Naive thymus-derived CD4-positive, alpha-beta T cell (primary cell): ENCODE measurements at regions of chrX and their contacts with region 1.

Region 1: DNA sequence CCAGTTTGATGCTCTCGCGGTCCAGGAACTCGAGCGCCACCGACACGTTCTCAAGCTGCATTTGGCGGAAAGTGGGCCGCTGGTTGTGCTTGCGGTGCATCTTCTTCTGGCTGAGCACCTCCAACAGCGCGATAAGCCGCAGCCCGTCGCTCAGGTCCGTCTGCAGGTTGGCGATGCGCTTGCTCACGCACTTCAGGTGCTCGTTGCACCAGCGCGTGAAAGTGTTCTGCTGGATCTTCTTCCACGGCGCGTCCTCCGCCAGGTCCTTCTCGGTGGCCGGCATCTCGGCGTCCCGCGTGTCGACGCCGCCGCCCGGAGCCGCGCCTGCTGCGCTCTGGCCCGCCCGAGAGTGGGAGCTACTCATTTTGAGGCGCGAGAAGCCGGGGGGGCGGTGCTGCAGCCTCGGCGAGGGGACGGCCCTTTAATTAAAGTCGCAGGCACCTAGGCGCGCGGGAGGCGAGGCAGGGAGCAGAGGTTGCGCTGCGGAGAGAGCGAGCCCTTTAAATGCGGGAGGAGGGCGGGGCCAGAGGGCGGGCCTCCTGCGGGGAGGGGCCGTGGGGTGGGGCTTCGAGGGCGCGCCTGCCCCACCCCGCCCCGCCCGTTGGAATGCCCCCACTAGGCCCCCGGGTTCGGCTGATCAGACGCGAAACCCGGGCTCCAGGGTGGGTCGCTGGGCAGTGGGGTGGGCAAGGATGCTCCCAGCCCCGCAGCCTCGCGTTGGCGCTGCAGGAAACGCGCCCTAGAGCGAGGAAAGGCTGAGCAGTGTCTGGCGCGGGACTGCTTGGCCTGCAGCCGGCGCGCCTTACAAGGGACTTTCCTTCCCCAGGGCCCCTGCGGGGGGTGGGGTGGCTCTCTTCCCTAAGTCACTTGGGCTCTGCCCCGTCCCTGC is 3.3 kb downstream of the FLNA start:
- DNase-seq: peak; percentile 73 to 91 (median 89)
- ATAC-seq: peak; percentile 77
- H3K4me3 ChIP-seq: peak overlapping the region; percentile 82
- H3K4me3 Mint-ChIP-seq: peak overlapping the region; percentile 77 to 89 (median 83)
- H3K27ac ChIP-seq: peak overlapping the region; percentile 91
- H3K27ac Mint-ChIP-seq: peak overlapping the region in 7 of 9 donors; percentile 25 to 77 (median 62)
- H3K4me1 ChIP-seq: peaks cover 29 to 37% of the 10 kb centered on the region in 2 donors
- H3K4me1 Mint-ChIP-seq: peaks cover 0 to 25% (median 17%) of the 10 kb centered on the region in 7 donors
- H3K27me3 ChIP-seq: no peaks in the 10 kb centered on the region
- H3K27me3 Mint-ChIP-seq: no peaks in the 10 kb centered on the region

Region 2: GRCh38 chrX:153845842-153846241 is 525.3 kb before region 1 on chrX:
- CTCF ChIA-PET with region 1: no interaction called
- POLR2A ChIA-PET with region 1: no interaction called
- intact Hi-C with region 1: no loop called
- DNase-seq: no peak
- ATAC-seq: no peak
- H3K4me3 ChIP-seq: no peak overlapping the region
- H3K4me3 Mint-ChIP-seq: no peak overlapping the region
- H3K27ac ChIP-seq: no peak overlapping the region
- H3K27ac Mint-ChIP-seq: no peak overlapping the region
- H3K4me1 ChIP-seq: no peaks in the 10 kb centered on the region
- H3K4me1 Mint-ChIP-seq: no peaks in the 10 kb centered on the region
- H3K27me3 ChIP-seq: no peaks in the 10 kb centered on the region
- H3K27me3 Mint-ChIP-seq: peaks cover 0 to 34% (median 7%) of the 10 kb centered on the region in 5 donors

Region 3: GRCh38 chrX:154317391-154317995 is 53.6 kb before region 1 on chrX:
- CTCF ChIA-PET with region 1: interaction called, 3 read pairs
- POLR2A ChIA-PET with region 1: interaction called, 3 read pairs
- intact Hi-C with region 1: loop called in 1 of 2 experiments (anchors 2 kb)
- DNase-seq: peak in 3 of 9 donors; percentile 37 to 39 (median 37)
- ATAC-seq: peak; percentile 37
- H3K4me3 ChIP-seq: no peak overlapping the region
- H3K4me3 Mint-ChIP-seq: peak overlapping the region in 8 of 10 donors; percentile 19 to 57 (median 48)
- H3K27ac ChIP-seq: no peak overlapping the region
- H3K27ac Mint-ChIP-seq: peak overlapping the region in 2 of 9 donors; percentile 64 to 91
- H3K4me1 ChIP-seq: peaks cover 13 to 17% of the 10 kb centered on the region in 2 donors
- H3K4me1 Mint-ChIP-seq: peaks cover 14 to 41% (median 39%) of the 10 kb centered on the region in 7 donors
- H3K27me3 ChIP-seq: no peaks in the 10 kb centered on the region
- H3K27me3 Mint-ChIP-seq: no peaks in the 10 kb centered on the region

Region 4: DNA sequence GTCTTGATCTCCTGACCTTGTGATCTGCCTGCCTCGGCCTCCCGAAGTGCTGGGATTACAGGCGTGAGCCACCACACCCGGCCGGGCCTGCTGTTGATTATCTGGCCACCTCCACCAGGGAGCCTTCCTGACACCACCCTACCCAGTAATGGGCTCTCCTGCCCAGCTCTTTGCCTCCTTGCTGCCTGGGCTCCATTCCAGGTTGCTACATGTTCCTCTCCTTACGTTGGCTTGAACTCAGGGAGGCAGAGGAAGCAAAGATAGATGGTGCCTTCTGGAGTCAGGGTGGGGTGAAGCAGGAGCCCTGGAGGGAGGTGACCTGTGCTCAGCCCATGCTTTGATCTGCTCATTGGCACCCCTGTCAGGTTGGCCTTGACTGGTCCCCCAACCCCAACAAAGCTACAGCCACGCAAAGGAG is 23.0 kb before region 1 on chrX:
- CTCF ChIA-PET with region 1: interaction called, 3 read pairs
- POLR2A ChIA-PET with region 1: interaction called, 45 read pairs
- intact Hi-C with region 1: no loop called
- DNase-seq: no peak
- ATAC-seq: no peak
- H3K4me3 ChIP-seq: no peak overlapping the region
- H3K4me3 Mint-ChIP-seq: peak overlapping the region in 3 of 10 donors; percentile 16 to 73 (median 41)
- H3K27ac ChIP-seq: no peak overlapping the region
- H3K27ac Mint-ChIP-seq: peak overlapping the region in 7 of 9 donors; percentile 28 to 91 (median 62)
- H3K4me1 ChIP-seq: peaks cover 33 to 56% of the 10 kb centered on the region in 2 donors
- H3K4me1 Mint-ChIP-seq: peaks cover 12 to 39% (median 21%) of the 10 kb centered on the region in 7 donors
- H3K27me3 ChIP-seq: no peaks in the 10 kb centered on the region
- H3K27me3 Mint-ChIP-seq: no peaks in the 10 kb centered on the region

Region 5: GRCh38 chrX:154428176-154429010 is 57.3 kb after region 1 on chrX and contains the start of gene ATP6AP1:
- CTCF ChIA-PET with region 1: interaction called, 5 read pairs
- POLR2A ChIA-PET with region 1: no interaction called
- intact Hi-C with region 1: loop called in 1 of 2 experiments (anchors 1 kb)
- DNase-seq: peak; percentile 72 to 90 (median 85)
- ATAC-seq: peak; percentile 98
- H3K4me3 ChIP-seq: peak within 1 kb of the TSS; percentile 55
- H3K4me3 Mint-ChIP-seq: peak within 1 kb of the TSS; percentile 77 to 86 (median 82)
- H3K27ac ChIP-seq: peak within 1 kb of the TSS; percentile 81
- H3K27ac Mint-ChIP-seq: peak within 1 kb of the TSS; percentile 76 to 91 (median 82)
- H3K4me1 ChIP-seq: peaks cover 0 to 4% of the 10 kb centered on the region in 2 donors
- H3K4me1 Mint-ChIP-seq: peaks cover 7 to 40% (median 25%) of the 10 kb centered on the region in 7 donors
- H3K27me3 ChIP-seq: no peaks in the 10 kb centered on the region
- H3K27me3 Mint-ChIP-seq: no peaks in the 10 kb centered on the region
- total RNA-seq, gene ATP6AP1: 37.8 to 63.3 (median 51.1) TPM

Region 6: GRCh38 chrX:154534862-154535670 is 163.9 kb after region 1 on chrX:
- CTCF ChIA-PET with region 1: interaction called, 13 read pairs
- POLR2A ChIA-PET with region 1: interaction called, 3 read pairs
- intact Hi-C with region 1: loop called (anchors 1 kb)
- DNase-seq: peak; percentile 78 to 93 (median 87)
- ATAC-seq: peak; percentile 100
- H3K4me3 ChIP-seq: no peak overlapping the region
- H3K4me3 Mint-ChIP-seq: no peak overlapping the region
- H3K27ac ChIP-seq: peak overlapping the region; percentile 55
- H3K27ac Mint-ChIP-seq: peak overlapping the region in 5 of 9 donors; percentile 26 to 72 (median 67)
- H3K4me1 ChIP-seq: no peaks in the 10 kb centered on the region
- H3K4me1 Mint-ChIP-seq: peaks cover 0 to 13% (median 6%) of the 10 kb centered on the region in 7 donors
- H3K27me3 ChIP-seq: no peaks in the 10 kb centered on the region
- H3K27me3 Mint-ChIP-seq: no peaks in the 10 kb centered on the region